CD8-positive, alpha-beta T cell (primary cell): ENCODE measurements at regions of chr1 and their contacts with region 1.

Region 1: DNA sequence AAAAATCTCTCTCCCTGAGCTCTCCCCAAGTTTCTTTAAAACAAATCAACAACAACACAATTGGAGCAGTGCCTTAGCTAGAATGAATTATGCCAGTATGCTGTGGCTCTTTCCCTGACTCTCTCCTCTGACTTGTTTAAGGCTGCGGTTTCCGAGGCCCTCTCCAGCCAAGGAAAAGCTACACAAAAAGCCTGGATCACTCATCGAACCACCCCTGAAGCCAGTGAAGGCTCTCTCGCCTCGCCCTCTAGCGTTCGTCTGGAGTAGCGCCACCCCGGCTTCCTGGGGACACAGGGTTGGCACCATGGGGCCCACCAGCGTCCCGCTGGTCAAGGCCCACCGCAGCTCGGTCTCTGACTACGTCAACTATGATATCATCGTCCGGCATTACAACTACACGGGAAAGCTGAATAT is 1.9 kb downstream of the S1PR1 start:
- DNase-seq: peak; percentile 76 to 92 (median 84)
- ATAC-seq: peak; percentile 35
- H3K4me3 ChIP-seq: peak overlapping the region; percentile 50 to 99
- H3K4me3 Mint-ChIP-seq: peak overlapping the region; percentile 99
- H3K27ac ChIP-seq: peak overlapping the region; percentile 68 to 71
- H3K27ac Mint-ChIP-seq: peak overlapping the region; percentile 98
- H3K4me1 ChIP-seq: peaks cover 64% of the 10 kb centered on the region
- H3K4me1 Mint-ChIP-seq: peaks cover 67% of the 10 kb centered on the region
- H3K27me3 ChIP-seq: no peaks in the 10 kb centered on the region
- H3K27me3 Mint-ChIP-seq: no peaks in the 10 kb centered on the region
- CTCF ChIP-seq: peak; percentile 89

Region 2: DNA sequence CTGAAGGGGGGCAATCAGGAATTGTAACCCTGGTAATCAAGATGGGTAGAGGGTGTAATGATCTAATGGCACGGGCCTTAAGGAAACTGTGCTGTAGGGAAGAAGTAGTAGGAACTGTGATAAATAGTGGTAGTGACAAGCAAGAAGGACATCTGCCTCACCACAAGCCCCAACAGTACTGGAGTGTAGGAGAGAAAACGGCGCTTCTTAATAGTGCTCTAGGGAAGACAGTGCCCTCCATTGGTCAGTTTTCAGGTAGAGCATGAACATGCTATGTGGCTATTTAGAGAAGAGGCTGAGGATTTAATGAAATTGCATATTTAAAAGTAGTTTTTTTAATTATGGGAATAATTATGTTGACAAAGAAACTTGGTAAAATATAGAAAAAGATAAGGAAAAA is 310.6 kb before region 1 on chr1:
- CTCF ChIA-PET with region 1: interaction called, 29 read pairs
- POLR2A ChIA-PET with region 1: interaction called, 29 read pairs
- intact Hi-C with region 1: loop called in 1 of 2 experiments (anchors 2 kb)
- DNase-seq: peak in 3 of 9 experiments; percentile 19 to 65 (median 48)
- ATAC-seq: no peak
- H3K4me3 ChIP-seq: peak overlapping the region in 1 of 2 experiments; percentile 13
- H3K4me3 Mint-ChIP-seq: no peak overlapping the region
- H3K27ac ChIP-seq: peak overlapping the region; percentile 40 to 78
- H3K27ac Mint-ChIP-seq: no peak overlapping the region
- H3K4me1 ChIP-seq: peaks cover 85% of the 10 kb centered on the region
- H3K4me1 Mint-ChIP-seq: peaks cover 45% of the 10 kb centered on the region
- H3K27me3 ChIP-seq: no peaks in the 10 kb centered on the region
- H3K27me3 Mint-ChIP-seq: no peaks in the 10 kb centered on the region
- CTCF ChIP-seq: no peak

Region 3: DNA sequence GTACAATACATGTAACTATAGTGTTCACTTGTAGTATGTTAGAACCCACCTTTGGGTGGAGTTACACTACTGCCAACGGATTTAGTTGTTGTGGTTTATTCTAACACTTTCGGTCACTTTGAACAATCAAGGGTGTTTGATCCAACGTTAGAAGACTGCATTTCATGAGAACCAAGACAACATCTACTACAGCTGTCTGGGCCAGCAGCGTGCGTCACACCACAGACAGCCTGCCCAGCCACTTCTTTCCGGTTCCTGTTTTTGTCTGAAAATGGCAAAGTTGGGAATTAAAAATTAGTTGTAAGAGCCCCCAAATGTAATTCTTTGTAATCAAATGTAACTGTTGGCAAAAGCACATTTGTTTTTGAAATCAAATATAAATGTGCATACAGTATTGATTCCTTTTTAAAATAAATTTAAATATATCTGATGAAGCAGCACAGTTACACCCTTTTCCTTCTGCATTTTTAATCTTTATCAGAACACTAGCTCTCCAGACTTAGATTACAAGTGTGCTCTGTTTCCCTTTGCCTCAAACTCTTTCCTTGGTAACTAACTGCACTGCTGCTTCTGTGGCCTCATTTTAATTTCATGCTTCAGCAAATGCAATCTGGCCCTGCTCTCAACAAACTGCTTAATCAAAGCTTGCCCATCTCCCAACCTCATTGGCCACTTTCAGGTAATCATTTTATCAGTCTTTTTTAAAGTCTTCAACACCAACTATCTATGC is 126.5 kb before region 1 on chr1:
- CTCF ChIA-PET with region 1: interaction called, 15 read pairs
- POLR2A ChIA-PET with region 1: interaction called, 23 read pairs
- intact Hi-C with region 1: loop called (anchors 1 kb)
- DNase-seq: peak; percentile 53 to 96 (median 73)
- ATAC-seq: peak; percentile 89
- H3K4me3 ChIP-seq: peak overlapping the region in 1 of 2 experiments; percentile 23
- H3K4me3 Mint-ChIP-seq: peak overlapping the region; percentile 66
- H3K27ac ChIP-seq: peak overlapping the region; percentile 84 to 93
- H3K27ac Mint-ChIP-seq: peak overlapping the region; percentile 99
- H3K4me1 ChIP-seq: peaks cover 42% of the 10 kb centered on the region
- H3K4me1 Mint-ChIP-seq: peaks cover 64% of the 10 kb centered on the region
- H3K27me3 ChIP-seq: no peaks in the 10 kb centered on the region
- H3K27me3 Mint-ChIP-seq: no peaks in the 10 kb centered on the region
- CTCF ChIP-seq: no peak

Region 4: GRCh38 chr1:101257500-101258325 is 19.0 kb after region 1 on chr1:
- CTCF ChIA-PET with region 1: interaction called, 86 read pairs
- POLR2A ChIA-PET with region 1: interaction called, 6 read pairs
- intact Hi-C with region 1: loop called in 1 of 2 experiments (anchors 2 kb)
- DNase-seq: peak in 5 of 9 experiments; percentile 27 to 79 (median 48)
- ATAC-seq: peak; percentile 64
- H3K4me3 ChIP-seq: no peak overlapping the region
- H3K4me3 Mint-ChIP-seq: peak overlapping the region; percentile 33
- H3K27ac ChIP-seq: peak overlapping the region in 1 of 2 experiments; percentile 68
- H3K27ac Mint-ChIP-seq: peak overlapping the region; percentile 66
- H3K4me1 ChIP-seq: peaks cover 53% of the 10 kb centered on the region
- H3K4me1 Mint-ChIP-seq: peaks cover 61% of the 10 kb centered on the region
- H3K27me3 ChIP-seq: no peaks in the 10 kb centered on the region
- H3K27me3 Mint-ChIP-seq: no peaks in the 10 kb centered on the region
- CTCF ChIP-seq: no peak

Region 5: DNA sequence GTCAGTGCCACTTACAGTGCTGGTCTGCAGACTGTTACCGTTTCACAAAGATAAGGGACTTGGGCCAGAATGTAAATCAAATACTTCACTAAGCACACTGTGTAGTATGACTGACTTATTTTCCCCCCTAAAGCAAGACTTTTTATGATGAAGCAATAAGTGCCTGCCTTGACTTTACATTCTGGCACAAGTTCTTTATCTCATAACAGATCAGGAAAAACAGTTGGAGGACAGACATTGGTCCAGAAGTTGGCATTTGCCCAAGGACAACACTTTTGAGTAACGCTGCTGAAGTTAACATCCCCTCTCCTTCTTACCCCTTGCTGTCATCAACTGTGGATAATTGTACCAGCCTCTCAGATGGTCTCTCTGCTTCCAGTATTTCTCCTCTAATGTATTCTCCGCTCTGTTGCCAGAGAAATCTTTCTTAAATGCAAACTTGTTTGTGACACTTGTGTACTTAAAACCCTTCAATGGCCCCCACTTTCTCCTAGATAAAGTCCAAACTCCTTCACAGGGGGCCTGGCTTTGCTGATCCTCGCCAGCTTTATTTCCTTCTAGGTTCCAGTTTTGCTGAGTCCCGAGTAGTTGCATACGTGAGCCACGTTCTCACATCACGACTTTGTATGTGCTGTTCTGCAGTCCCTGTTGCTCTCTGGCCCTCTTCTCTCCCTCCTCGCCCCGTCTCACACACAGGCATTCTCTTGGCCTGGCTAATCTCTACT is 43.8 kb after region 1 on chr1:
- CTCF ChIA-PET with region 1: interaction called, 405 read pairs
- POLR2A ChIA-PET with region 1: interaction called, 56 read pairs
- intact Hi-C with region 1: loop called in 1 of 2 experiments (anchors 1 kb)
- DNase-seq: no peak
- ATAC-seq: no peak
- H3K4me3 ChIP-seq: no peak overlapping the region
- H3K4me3 Mint-ChIP-seq: no peak overlapping the region
- H3K27ac ChIP-seq: peak overlapping the region; percentile 52 to 84
- H3K27ac Mint-ChIP-seq: peak overlapping the region; percentile 98
- H3K4me1 ChIP-seq: peaks cover 94% of the 10 kb centered on the region
- H3K4me1 Mint-ChIP-seq: peaks cover 96% of the 10 kb centered on the region
- H3K27me3 ChIP-seq: no peaks in the 10 kb centered on the region
- H3K27me3 Mint-ChIP-seq: no peaks in the 10 kb centered on the region
- CTCF ChIP-seq: no peak

Region 6: DNA sequence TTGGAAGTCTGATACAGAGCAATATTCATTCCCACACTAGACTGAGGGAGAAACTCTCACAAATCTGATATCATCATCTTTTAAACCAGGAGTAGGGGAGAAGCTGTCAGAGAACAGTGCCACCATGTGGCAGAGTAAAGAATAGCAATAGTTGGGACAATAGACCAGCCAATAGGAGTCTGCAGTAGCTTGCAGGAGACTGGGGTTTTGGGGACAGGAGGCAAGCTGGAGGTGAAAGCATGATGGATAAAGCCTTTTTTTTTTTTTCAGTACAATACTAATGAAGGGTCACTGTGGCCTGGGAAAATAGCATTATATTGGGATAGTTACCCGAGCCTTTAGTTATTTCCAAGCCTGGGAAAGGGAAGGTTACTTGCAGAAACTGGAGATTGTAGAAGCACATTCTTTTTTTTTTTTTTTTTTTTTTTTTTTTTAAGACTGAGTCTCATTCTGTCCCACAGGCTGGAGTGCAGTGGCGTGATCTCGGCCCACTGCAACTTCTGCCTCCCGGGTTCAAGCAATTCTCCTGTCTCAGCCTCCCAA is 118.8 kb after region 1 on chr1:
- CTCF ChIA-PET with region 1: interaction called, 7 read pairs
- POLR2A ChIA-PET with region 1: interaction called, 3 read pairs
- intact Hi-C with region 1: loop called (anchors 1 to 5 kb)
- DNase-seq: peak; percentile 38 to 92 (median 67)
- ATAC-seq: peak; percentile 100
- H3K4me3 ChIP-seq: no peak overlapping the region
- H3K4me3 Mint-ChIP-seq: no peak overlapping the region
- H3K27ac ChIP-seq: no peak overlapping the region
- H3K27ac Mint-ChIP-seq: peak overlapping the region; percentile 28
- H3K4me1 ChIP-seq: peaks cover 6% of the 10 kb centered on the region
- H3K4me1 Mint-ChIP-seq: peaks cover 8% of the 10 kb centered on the region
- H3K27me3 ChIP-seq: no peaks in the 10 kb centered on the region
- H3K27me3 Mint-ChIP-seq: peaks cover 3% of the 10 kb centered on the region
- CTCF ChIP-seq: peak; percentile 87

Region 7: GRCh38 chr1:101484689-101485338 is 246.1 kb after region 1 on chr1:
- CTCF ChIA-PET with region 1: no interaction called
- POLR2A ChIA-PET with region 1: no interaction called
- intact Hi-C with region 1: no loop called
- DNase-seq: no peak
- ATAC-seq: no peak
- H3K4me3 ChIP-seq: no peak overlapping the region
- H3K4me3 Mint-ChIP-seq: no peak overlapping the region
- H3K27ac ChIP-seq: no peak overlapping the region
- H3K27ac Mint-ChIP-seq: no peak overlapping the region
- H3K4me1 ChIP-seq: no peaks in the 10 kb centered on the region
- H3K4me1 Mint-ChIP-seq: no peaks in the 10 kb centered on the region
- H3K27me3 ChIP-seq: no peaks in the 10 kb centered on the region
- H3K27me3 Mint-ChIP-seq: peaks cover 4% of the 10 kb centered on the region
- CTCF ChIP-seq: no peak

Region 8: DNA sequence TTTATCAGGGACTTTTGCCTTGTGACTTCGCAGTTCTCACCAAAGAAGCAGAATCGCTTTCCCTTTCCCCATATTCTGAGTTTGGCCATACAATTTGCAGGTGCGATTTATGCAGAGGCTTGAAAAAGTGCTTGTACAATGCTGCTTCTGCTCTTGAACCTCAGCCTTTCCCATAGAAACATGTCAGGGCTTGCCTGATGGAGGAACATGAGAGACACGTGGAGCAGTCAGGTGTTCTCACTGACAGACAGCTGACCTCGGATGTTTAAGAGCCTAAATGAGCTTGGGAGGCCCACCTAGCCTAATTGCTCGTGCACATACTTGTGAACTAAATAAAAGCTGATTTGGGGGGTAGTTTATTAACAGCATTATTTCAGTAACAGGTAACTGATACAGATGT is 288.1 kb after region 1 on chr1:
- CTCF ChIA-PET with region 1: no interaction called
- POLR2A ChIA-PET with region 1: no interaction called
- intact Hi-C with region 1: no loop called
- DNase-seq: no peak
- ATAC-seq: no peak
- H3K4me3 ChIP-seq: no peak overlapping the region
- H3K4me3 Mint-ChIP-seq: no peak overlapping the region
- H3K27ac ChIP-seq: no peak overlapping the region
- H3K27ac Mint-ChIP-seq: no peak overlapping the region
- H3K4me1 ChIP-seq: no peaks in the 10 kb centered on the region
- H3K4me1 Mint-ChIP-seq: peaks cover 6% of the 10 kb centered on the region
- H3K27me3 ChIP-seq: no peaks in the 10 kb centered on the region
- H3K27me3 Mint-ChIP-seq: peaks cover 13% of the 10 kb centered on the region
- CTCF ChIP-seq: no peak

Region 9: GRCh38 chr1:101667761-101668160 is 429.1 kb after region 1 on chr1:
- CTCF ChIA-PET with region 1: no interaction called
- POLR2A ChIA-PET with region 1: no interaction called
- intact Hi-C with region 1: no loop called
- DNase-seq: no peak
- ATAC-seq: no peak
- H3K4me3 ChIP-seq: no peak overlapping the region
- H3K4me3 Mint-ChIP-seq: no peak overlapping the region
- H3K27ac ChIP-seq: no peak overlapping the region
- H3K27ac Mint-ChIP-seq: no peak overlapping the region
- H3K4me1 ChIP-seq: no peaks in the 10 kb centered on the region
- H3K4me1 Mint-ChIP-seq: no peaks in the 10 kb centered on the region
- H3K27me3 ChIP-seq: no peaks in the 10 kb centered on the region
- H3K27me3 Mint-ChIP-seq: no peaks in the 10 kb centered on the region
- CTCF ChIP-seq: no peak